ENCODE measurements at regions of chr1 and their contacts with region 1.

Region 1: DNA sequence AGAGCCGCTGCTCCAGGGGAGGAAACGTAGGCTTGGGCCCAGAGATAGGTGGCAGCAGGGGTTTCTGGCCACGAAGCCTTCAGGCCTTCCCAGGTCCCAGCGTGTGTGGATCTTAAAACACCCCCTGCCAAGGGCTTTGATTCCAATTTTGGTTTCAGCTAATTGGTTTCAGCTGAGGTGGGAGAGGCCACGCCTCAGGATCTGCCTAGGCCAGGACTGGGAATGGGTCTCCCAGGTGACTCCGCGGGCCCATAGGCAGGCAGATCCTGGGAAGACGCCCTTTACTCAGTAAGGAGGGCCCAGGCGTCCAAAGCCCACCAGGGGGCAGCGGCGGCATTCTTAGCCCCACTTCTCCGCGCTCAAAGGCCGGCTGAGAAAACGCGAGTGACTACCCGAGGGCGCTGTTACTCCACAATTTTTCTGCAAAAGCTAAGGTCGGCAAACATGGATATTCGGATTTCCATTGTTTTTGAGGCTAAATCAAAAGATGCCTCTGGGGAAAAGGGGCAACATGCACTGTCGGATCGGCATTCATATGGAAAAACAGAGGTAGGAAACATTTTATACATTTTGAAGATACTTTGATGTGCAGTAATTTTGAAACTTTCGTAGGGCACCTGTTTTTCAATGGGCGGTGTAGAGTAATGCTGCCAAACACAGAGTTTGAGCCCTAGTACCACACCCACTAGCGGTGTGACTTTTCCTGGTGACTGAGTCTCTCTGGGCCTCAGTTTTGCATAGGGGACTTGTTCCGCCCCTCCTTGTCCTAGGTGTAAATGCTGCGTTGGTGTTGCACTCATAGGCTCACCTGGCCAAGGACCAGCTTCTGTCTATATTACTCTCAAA is 31.8 kb upstream of the BCL10 start:
- DNase-seq: peak; percentile 77

Region 2: GRCh38 chr1:84907095-84907827 is 400.9 kb before region 1 on chr1:
- in situ Hi-C with region 1: no loop called
- DNase-seq: peak; percentile 53

Region 3: GRCh38 chr1:85200870-85201339 is 107.3 kb before region 1 on chr1 and contains the start of gene SYDE2:
- in situ Hi-C with region 1: no loop called
- DNase-seq: peak; percentile 86
- total RNA-seq, gene SYDE2: 1.8 and 2.1 TPM in 2 replicates

Region 4: DNA sequence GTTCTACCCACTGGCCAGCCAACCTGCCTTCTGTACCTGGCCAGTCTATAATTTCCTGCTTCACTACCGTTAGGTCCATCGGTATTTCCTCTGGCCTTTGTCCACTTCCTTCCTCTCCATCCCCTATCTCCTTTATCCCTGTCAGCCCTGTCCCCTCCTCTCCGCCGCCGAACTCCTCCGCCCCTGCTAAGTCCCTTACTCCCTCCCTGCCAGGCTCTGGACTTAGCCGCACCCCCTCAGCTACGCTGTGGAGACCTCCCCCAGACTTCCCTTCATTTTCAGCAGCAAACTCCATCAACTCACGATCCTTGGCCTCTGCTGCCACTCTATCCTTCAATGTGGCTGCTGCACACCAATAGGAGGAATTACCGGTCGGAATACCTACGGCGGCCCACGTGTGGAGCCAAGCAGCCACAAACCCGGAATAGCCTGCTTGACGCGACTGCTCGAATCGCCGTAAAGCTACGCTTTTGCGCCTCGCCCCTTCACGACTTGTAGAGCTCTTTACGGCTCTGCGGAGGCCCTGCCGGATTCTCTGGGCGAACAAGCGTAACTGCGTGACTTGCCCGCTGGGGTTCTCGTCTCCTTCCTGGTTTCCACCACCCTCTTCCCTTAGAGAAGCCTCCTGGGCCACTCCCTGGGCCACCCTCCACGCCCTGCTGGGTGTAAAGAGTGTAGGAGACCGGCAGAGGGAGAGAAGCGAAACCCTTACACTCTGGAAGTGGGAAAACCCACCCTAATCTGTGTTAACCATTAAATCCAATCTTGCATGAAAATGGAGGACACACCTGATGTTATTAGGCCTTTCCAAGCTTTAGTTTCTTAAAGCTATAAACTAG is 400.0 kb after region 1 on chr1 and contains the start of gene ZNHIT6:
- in situ Hi-C with region 1: loop called (anchors 25 kb)
- DNase-seq: peak; percentile 98
- total RNA-seq, gene ZNHIT6: 8.3 and 10.3 TPM in 2 replicates